AG04450 (cell line): ENCODE measurements at regions of chr7 and their contacts with region 1.

Region 1: DNA sequence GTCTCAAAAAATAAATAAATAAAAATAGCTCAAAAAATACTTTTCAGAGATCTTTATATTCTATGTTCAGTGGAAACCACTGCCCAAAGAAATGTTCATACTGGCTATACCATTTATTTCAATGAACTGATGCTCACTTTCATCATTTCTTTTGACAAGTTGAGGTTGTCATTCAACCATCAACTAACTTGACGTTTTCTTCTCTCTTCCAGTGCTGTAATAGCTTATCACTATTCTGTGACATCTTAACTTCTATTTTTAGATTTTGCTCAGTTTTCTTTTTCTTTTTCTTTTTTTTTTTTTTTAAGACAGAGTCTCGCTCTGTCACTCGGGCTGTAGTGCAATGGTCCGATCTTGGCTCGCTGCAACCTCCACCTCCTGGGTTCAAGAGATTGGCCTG is 8.7 kb upstream of the CTAGE4 start:
- DNase-seq: no peak
- H3K4me3 ChIP-seq: no peak overlapping the region
- H3K27ac ChIP-seq: no peak overlapping the region
- H3K27me3 ChIP-seq: no peaks in the 10 kb centered on the region
- CTCF ChIP-seq: no peak

Region 2: DNA sequence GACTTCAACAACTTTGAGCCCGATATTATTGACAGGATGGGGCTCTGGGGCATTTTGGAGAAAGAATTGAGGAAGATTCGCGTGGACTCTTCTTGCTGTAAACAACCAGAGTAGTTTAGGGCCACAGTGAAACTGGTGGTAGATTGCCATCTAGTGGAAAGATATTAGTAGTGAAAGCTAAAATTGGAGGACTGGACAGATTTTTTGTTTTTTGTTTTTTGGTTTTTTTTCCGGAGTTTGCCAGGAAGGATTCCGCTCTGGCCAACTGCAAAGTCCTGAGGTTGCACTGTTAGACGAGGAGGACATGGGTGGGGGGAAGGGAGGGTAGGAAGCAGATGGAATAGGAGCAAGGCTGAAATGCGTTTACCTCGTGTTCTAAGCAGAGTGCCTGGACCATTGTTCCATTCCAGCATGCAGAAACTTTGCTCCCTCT is 217.2 kb after region 1 on chr7:
- CTCF ChIA-PET with region 1: interaction called, 24 read pairs
- POLR2A ChIA-PET with region 1: no interaction called
- DNase-seq: peak; percentile 6
- H3K4me3 ChIP-seq: no peak overlapping the region; the same call in 1 of the 2 replicates
- H3K27ac ChIP-seq: no peak overlapping the region
- H3K27me3 ChIP-seq: no peaks in the 10 kb centered on the region
- CTCF ChIP-seq: peak; percentile 74